H1 (cell line): ENCODE measurements at regions of chr1 and their contacts with region 1.

Region 1: DNA sequence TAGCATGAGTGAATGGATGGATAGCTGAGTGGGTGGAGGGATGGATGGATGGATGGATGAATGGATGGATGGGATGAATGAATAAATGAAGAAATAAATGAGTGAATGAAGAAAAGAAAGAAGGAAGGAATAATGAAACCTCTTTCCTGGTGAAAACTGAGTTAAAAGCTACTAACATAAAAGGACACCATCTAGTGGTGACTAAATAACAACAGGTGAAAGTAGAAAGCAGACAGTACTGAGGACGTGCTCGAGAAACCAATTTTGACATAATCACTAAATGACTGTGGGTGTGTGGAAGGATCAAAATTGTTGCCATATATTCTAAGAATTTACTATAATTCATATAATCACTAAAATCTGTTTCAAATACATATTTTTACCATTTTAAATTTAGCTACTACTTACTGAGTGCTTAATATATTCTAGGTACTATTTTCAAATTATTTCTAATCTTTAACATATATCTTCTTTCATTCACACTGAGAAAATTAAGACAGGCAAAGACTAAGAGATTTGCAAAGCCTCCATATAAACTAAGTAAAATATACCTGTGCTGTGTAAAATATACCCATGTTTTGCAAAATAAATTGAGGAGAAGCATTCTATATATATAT is 522.9 kb downstream of the LRRIQ3 start:
- DNase-seq: no peak
- H3K4me3 ChIP-seq: no peak overlapping the region
- H3K27ac ChIP-seq: no peak overlapping the region
- H3K4me1 ChIP-seq: no peaks in the 10 kb centered on the region
- H3K27me3 ChIP-seq: no peaks in the 10 kb centered on the region
- CTCF ChIP-seq: peak in 2 of 3 experiments; percentile 28 to 56; a peak in 2 of 4 replicates
- EP300 ChIP-seq: no peak
- POLR2A ChIP-seq: no peak
- RAD21 ChIP-seq: peak; percentile 62 to 64

Region 2: GRCh38 chr1:73701826-73702225 is 26.8 kb after region 1 on chr1:
- CTCF ChIA-PET with region 1: interaction called, 11 read pairs
- POLR2A ChIA-PET with region 1: no interaction called
- DNase-seq: no peak
- H3K4me3 ChIP-seq: no peak overlapping the region
- H3K27ac ChIP-seq: no peak overlapping the region
- H3K4me1 ChIP-seq: no peaks in the 10 kb centered on the region; a peak in 1 of 7 replicates
- H3K27me3 ChIP-seq: no peaks in the 10 kb centered on the region
- CTCF ChIP-seq: no peak
- EP300 ChIP-seq: no peak
- POLR2A ChIP-seq: no peak
- RAD21 ChIP-seq: no peak

Region 3: GRCh38 chr1:73980324-73981040 is 305.4 kb after region 1 on chr1:
- CTCF ChIA-PET with region 1: no interaction called
- POLR2A ChIA-PET with region 1: no interaction called
- DNase-seq: no peak
- H3K4me3 ChIP-seq: no peak overlapping the region
- H3K27ac ChIP-seq: no peak overlapping the region
- H3K4me1 ChIP-seq: no peaks in the 10 kb centered on the region; a peak in 1 of 7 replicates
- H3K27me3 ChIP-seq: no peaks in the 10 kb centered on the region
- CTCF ChIP-seq: no peak
- EP300 ChIP-seq: no peak
- POLR2A ChIP-seq: no peak
- RAD21 ChIP-seq: no peak